Mammary epithelial cell (primary cell): ENCODE measurements at regions of chr4 and their contacts with region 1.

Region 1: DNA sequence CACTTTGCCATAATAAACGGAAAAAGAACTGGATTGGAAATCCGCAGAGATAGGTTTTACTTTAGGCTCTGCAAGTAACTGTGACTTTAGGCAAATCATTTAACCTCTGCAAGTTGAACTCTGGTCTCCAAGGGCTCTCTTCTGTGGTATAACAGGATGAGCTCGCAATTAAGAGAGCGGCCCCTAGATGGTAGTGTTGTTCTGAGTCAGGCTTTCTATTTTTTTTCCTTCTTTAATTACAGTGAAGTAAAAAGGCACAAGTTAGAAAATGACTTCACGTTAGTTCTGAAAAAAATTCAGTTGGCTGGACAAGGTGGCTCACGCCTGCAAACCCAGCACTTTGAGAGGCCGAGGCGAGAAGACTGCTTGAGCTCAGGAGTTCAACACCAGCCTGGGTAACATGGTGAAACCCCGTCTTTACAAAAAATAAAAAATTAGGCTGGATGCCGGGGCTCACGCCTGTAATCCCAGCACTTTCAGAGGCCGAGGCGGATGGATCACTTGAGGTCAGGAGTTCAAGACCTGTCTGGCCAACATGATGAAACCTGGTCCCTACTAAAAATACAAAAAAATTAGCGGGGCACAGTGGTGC is 18.0 kb downstream of the RPS3A start:
- DNase-seq: peak; percentile 53
- H3K4me3 ChIP-seq: no peak overlapping the region
- H3K27ac ChIP-seq: no peak overlapping the region
- H3K4me1 ChIP-seq: no peaks in the 10 kb centered on the region
- H3K27me3 ChIP-seq: no peaks in the 10 kb centered on the region
- CTCF ChIP-seq: peak; percentile 69 to 78

Region 2: GRCh38 chr4:150999086-150999485 is 118.4 kb before region 1 on chr4:
- CTCF ChIA-PET with region 1: no interaction called
- dilution Hi-C with region 1: no loop called
- in situ Hi-C with region 1: no loop called
- intact Hi-C with region 1: no loop called
- DNase-seq: no peak
- H3K4me3 ChIP-seq: no peak overlapping the region
- H3K27ac ChIP-seq: no peak overlapping the region
- H3K4me1 ChIP-seq: peaks cover 4% of the 10 kb centered on the region
- H3K27me3 ChIP-seq: no peaks in the 10 kb centered on the region
- CTCF ChIP-seq: no peak

Region 3: DNA sequence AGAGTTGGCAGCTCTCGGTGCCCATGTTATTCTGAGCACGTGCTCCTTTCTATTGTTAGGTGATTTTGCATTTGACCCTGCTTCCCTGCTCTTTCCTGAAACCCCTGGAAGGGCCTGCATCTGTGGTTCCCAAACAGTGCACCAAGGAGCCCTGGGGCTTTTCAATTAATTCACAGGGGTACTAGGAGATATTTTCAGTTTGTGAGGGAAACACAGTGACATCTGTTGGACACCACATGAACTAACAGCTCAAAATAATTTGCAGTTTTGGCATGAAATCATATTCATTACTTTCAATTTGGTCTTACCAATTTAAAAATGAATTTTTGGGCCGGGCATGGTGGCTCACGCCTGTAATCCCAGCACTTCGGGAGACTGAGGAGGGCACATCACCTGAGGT is 486.8 kb after region 1 on chr4:
- CTCF ChIA-PET with region 1: no interaction called
- dilution Hi-C with region 1: no loop called
- in situ Hi-C with region 1: loop called in 1 of 2 experiments (anchors 25 kb)
- intact Hi-C with region 1: loop called (anchors 5 kb)
- DNase-seq: no peak
- H3K4me3 ChIP-seq: no peak overlapping the region
- H3K27ac ChIP-seq: no peak overlapping the region
- H3K4me1 ChIP-seq: peaks cover 9% of the 10 kb centered on the region
- H3K27me3 ChIP-seq: no peaks in the 10 kb centered on the region
- CTCF ChIP-seq: peak; percentile 43 to 48

Region 4: DNA sequence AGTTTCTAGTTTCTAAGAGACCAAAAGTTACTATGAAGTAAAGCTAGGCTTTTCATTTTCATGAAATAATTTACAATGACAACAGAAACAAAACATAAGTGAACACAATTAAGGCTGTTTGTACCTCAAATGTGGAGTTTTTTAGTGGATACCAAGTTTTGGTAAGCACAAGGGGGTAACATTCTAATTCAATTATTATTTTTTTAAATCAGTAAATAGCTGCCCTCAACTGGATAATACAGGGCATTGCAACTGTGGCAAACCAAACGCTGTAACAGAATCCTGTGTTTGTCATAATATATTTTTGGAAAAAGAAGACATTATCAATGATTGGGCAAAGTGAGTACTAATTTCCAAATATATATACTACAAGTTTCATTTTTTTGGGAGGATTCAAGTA is 1268.1 kb after region 1 on chr4:
- CTCF ChIA-PET with region 1: no interaction called
- dilution Hi-C with region 1: no loop called
- in situ Hi-C with region 1: loop called in 1 of 2 experiments (anchors 25 kb)
- intact Hi-C with region 1: no loop called
- DNase-seq: no peak
- H3K4me3 ChIP-seq: no peak overlapping the region
- H3K27ac ChIP-seq: no peak overlapping the region
- H3K4me1 ChIP-seq: no peaks in the 10 kb centered on the region
- H3K27me3 ChIP-seq: no peaks in the 10 kb centered on the region
- CTCF ChIP-seq: peak; percentile 60 to 62